B cell (primary cell): ENCODE measurements at regions of chr20 and their contacts with region 1.

Region 1: GRCh38 chr20:34312544-34313217 is 9.5 kb upstream of the AHCY start:
- DNase-seq: peak; percentile 90
- ATAC-seq: peak; percentile 100
- H3K4me3 ChIP-seq: no peak overlapping the region
- H3K4me3 Mint-ChIP-seq: peak overlapping the region; percentile 32
- H3K27ac ChIP-seq: no peak overlapping the region
- H3K27ac Mint-ChIP-seq: peak overlapping the region; percentile 50
- H3K4me1 ChIP-seq: peaks cover 17 to 20% of the 10 kb centered on the region in 2 donors
- H3K4me1 Mint-ChIP-seq: peaks cover 16% of the 10 kb centered on the region
- H3K27me3 ChIP-seq: peaks cover 0 to 18% (median 13%) of the 10 kb centered on the region in 4 experiments
- H3K27me3 Mint-ChIP-seq: peaks cover 13% of the 10 kb centered on the region
- CTCF ChIP-seq: peak; percentile 100

Region 2: DNA sequence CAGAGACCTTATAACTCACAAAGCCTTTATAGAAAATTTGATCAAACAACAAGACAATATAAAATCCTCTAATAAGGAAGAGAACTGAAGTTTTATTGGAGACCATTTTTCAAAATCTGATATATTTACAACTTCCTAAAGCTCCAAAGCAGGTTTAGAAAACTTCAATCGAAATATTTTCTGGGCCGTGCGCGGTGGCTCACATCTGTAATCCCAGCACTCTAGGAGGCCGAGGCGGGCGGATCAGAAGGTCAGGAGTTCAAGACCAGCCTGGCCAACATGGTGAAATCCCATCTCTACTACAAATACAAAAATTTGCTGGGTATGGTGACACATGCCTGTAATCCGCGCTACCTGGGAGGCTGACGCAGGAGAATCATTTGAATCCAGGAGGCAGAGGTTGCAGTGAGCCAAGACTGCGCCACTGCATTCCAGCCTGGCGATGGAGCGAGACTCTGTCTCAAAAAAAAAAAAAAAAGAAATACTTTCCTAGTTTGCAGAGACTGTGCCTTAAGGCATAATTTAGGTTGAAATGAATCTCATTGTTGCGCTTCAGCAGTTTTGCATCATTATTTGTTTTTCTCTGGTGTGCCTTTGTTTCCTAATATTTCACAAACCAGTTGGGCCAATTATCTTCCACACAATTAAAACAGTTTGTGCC is 132.1 kb before region 1 on chr20:
- CTCF ChIA-PET with region 1: no interaction called
- POLR2A ChIA-PET with region 1: no interaction called
- intact Hi-C with region 1: no loop called
- DNase-seq: no peak
- ATAC-seq: no peak
- H3K4me3 ChIP-seq: no peak overlapping the region
- H3K4me3 Mint-ChIP-seq: no peak overlapping the region
- H3K27ac ChIP-seq: no peak overlapping the region
- H3K27ac Mint-ChIP-seq: no peak overlapping the region
- H3K4me1 ChIP-seq: no peaks in the 10 kb centered on the region
- H3K4me1 Mint-ChIP-seq: peaks cover 3% of the 10 kb centered on the region
- H3K27me3 ChIP-seq: peaks cover 0 to 4% (median 1%) of the 10 kb centered on the region in 4 experiments
- H3K27me3 Mint-ChIP-seq: peaks cover 15% of the 10 kb centered on the region
- CTCF ChIP-seq: no peak

Region 3: DNA sequence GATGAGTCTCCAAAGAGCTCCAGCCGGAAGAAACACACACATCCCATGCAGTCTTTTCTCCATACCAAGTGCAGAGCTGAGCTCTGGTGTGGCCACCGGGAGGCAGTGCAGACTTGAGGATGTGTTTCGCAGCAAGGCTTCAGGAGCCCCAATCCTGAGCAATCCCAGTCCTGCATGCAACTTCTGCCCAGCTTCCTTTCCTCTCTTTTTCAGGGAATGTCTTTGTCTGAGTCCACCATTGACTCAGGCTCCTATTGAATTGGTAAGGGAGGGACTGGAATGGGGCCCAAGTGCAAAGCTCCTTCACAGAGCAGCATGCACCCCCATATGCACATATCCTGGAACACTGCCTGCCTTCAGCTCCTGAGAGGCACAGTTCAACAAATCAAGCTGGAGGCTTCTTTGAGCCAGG is 122.0 kb before region 1 on chr20:
- CTCF ChIA-PET with region 1: interaction called, 21 read pairs
- POLR2A ChIA-PET with region 1: no interaction called
- intact Hi-C with region 1: no loop called
- DNase-seq: peak; percentile 53
- ATAC-seq: no peak
- H3K4me3 ChIP-seq: no peak overlapping the region
- H3K4me3 Mint-ChIP-seq: no peak overlapping the region
- H3K27ac ChIP-seq: no peak overlapping the region
- H3K27ac Mint-ChIP-seq: no peak overlapping the region
- H3K4me1 ChIP-seq: no peaks in the 10 kb centered on the region
- H3K4me1 Mint-ChIP-seq: peaks cover 1% of the 10 kb centered on the region
- H3K27me3 ChIP-seq: peaks cover 0 to 7% (median 0%) of the 10 kb centered on the region in 4 experiments
- H3K27me3 Mint-ChIP-seq: peaks cover 48% of the 10 kb centered on the region
- CTCF ChIP-seq: peak; percentile 41

Region 4: DNA sequence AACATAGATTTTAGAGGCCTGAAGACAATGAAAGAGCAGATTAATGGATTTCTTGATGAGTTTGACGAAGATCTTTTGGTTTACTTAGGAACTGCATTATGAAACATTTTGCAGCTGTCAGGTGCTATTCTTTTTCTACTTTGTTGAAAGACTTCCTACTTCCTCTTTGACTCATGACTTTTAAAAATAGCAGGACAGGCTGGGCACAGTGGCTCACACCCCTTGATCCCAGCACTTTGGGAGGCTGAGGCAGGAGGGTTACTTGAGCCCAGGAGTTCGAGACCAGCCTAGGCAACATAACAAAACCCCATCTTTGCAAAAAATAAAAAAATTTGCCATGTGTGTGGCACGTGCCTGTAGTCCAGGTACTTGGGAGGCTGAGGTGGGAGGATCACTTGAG is 102.4 kb after region 1 on chr20:
- CTCF ChIA-PET with region 1: interaction called, 20 read pairs
- POLR2A ChIA-PET with region 1: no interaction called
- intact Hi-C with region 1: loop called (anchors 5 kb)
- DNase-seq: peak; percentile 31
- ATAC-seq: no peak
- H3K4me3 ChIP-seq: peak overlapping the region in 1 of 5 experiments; percentile 12
- H3K4me3 Mint-ChIP-seq: peak overlapping the region; percentile 64
- H3K27ac ChIP-seq: peak overlapping the region; percentile 35 to 42
- H3K27ac Mint-ChIP-seq: peak overlapping the region; percentile 74
- H3K4me1 ChIP-seq: peaks cover 16 to 20% of the 10 kb centered on the region in 2 donors
- H3K4me1 Mint-ChIP-seq: peaks cover 18% of the 10 kb centered on the region
- H3K27me3 ChIP-seq: no peaks in the 10 kb centered on the region
- H3K27me3 Mint-ChIP-seq: no peaks in the 10 kb centered on the region
- CTCF ChIP-seq: no peak

Region 5: GRCh38 chr20:34493646-34494045 is 181.0 kb after region 1 on chr20:
- CTCF ChIA-PET with region 1: interaction called, 14 read pairs
- POLR2A ChIA-PET with region 1: no interaction called
- intact Hi-C with region 1: no loop called
- DNase-seq: no peak
- ATAC-seq: no peak
- H3K4me3 ChIP-seq: no peak overlapping the region
- H3K4me3 Mint-ChIP-seq: no peak overlapping the region
- H3K27ac ChIP-seq: no peak overlapping the region
- H3K27ac Mint-ChIP-seq: no peak overlapping the region
- H3K4me1 ChIP-seq: peaks cover 3 to 6% of the 10 kb centered on the region in 2 donors
- H3K4me1 Mint-ChIP-seq: peaks cover 13% of the 10 kb centered on the region
- H3K27me3 ChIP-seq: no peaks in the 10 kb centered on the region
- H3K27me3 Mint-ChIP-seq: no peaks in the 10 kb centered on the region
- CTCF ChIP-seq: no peak

Region 6: DNA sequence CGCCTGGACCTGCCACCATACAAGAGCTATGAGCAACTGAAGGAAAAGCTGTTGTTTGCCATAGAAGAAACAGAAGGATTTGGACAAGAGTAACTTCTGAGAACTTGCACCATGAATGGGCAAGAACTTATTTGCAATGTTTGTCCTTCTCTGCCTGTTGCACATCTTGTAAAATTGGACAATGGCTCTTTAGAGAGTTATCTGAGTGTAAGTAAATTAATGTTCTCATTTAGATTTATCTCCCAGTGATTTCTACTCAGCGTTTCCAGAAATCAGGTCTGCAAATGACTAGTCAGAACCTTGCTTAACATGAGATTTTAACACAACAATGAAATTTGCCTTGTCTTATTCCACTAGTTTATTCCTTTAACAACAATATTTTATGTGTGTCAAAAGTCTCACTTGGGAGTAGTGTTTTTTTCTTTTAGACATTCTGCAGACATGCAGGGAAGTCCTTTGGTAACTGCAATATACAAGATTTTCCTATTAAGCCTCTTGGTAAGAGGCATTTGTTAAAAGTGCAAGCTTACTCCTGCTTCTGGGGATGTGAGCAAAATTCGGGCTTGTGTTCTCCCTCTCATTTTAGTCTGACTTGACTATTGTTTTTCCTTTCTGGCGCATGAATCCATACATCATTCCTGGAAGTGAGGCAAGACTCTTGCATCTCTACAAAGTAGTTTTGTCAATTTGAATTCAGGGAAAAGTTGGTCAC is 195.2 kb after region 1 on chr20:
- CTCF ChIA-PET with region 1: no interaction called
- POLR2A ChIA-PET with region 1: no interaction called
- intact Hi-C with region 1: no loop called
- DNase-seq: no peak
- ATAC-seq: no peak
- H3K4me3 ChIP-seq: no peak overlapping the region
- H3K4me3 Mint-ChIP-seq: no peak overlapping the region
- H3K27ac ChIP-seq: no peak overlapping the region
- H3K27ac Mint-ChIP-seq: no peak overlapping the region
- H3K4me1 ChIP-seq: no peaks in the 10 kb centered on the region
- H3K4me1 Mint-ChIP-seq: peaks cover 3% of the 10 kb centered on the region
- H3K27me3 ChIP-seq: no peaks in the 10 kb centered on the region
- H3K27me3 Mint-ChIP-seq: no peaks in the 10 kb centered on the region
- CTCF ChIP-seq: no peak

Region 7: DNA sequence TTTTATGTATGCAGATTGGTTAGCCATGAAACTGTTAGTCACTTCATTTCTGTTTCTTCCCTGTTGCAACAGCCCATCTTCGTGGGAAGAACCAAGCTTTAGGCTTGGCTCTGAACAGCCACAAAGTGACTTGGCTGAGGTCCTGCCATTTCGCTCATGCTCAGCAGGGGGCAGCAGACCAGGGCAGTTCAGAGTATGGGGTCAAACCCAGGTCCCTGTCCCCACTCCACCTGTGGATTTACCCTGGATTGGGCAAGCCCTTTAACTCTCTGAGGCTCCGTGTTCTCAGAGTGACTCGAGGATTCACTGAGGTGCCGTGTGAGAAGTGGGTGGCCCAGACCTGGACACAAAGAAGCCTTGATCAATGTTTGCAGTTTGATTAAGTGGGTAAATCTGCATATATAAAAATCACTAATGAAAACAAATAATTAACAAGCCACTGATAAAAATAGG is 226.0 kb after region 1 on chr20:
- CTCF ChIA-PET with region 1: interaction called, 14 read pairs
- POLR2A ChIA-PET with region 1: interaction called, 4 read pairs
- intact Hi-C with region 1: loop called (anchors 5 kb)
- DNase-seq: peak; percentile 67
- ATAC-seq: peak; percentile 68
- H3K4me3 ChIP-seq: no peak overlapping the region
- H3K4me3 Mint-ChIP-seq: no peak overlapping the region
- H3K27ac ChIP-seq: no peak overlapping the region
- H3K27ac Mint-ChIP-seq: no peak overlapping the region
- H3K4me1 ChIP-seq: no peaks in the 10 kb centered on the region
- H3K4me1 Mint-ChIP-seq: peaks cover 12% of the 10 kb centered on the region
- H3K27me3 ChIP-seq: no peaks in the 10 kb centered on the region
- H3K27me3 Mint-ChIP-seq: no peaks in the 10 kb centered on the region
- CTCF ChIP-seq: peak; percentile 92

Region 8: GRCh38 chr20:34955232-34956040 is 642.8 kb after region 1 on chr20 and contains the starts of genes GSS and MYH7B:
- CTCF ChIA-PET with region 1: no interaction called
- POLR2A ChIA-PET with region 1: no interaction called
- intact Hi-C with region 1: loop called (anchors 2 kb)
- DNase-seq: peak; percentile 95
- ATAC-seq: peak; percentile 93
- H3K4me3 ChIP-seq: peak within 1 kb of the TSS; percentile 58 to 88 (median 73)
- H3K4me3 Mint-ChIP-seq: peak within 1 kb of the TSS; percentile 97
- H3K27ac ChIP-seq: peak within 1 kb of the TSS; percentile 42 to 79
- H3K27ac Mint-ChIP-seq: peak within 1 kb of the TSS; percentile 93
- H3K4me1 ChIP-seq: peaks cover 5 to 16% of the 10 kb centered on the region in 2 donors
- H3K4me1 Mint-ChIP-seq: peaks cover 25% of the 10 kb centered on the region
- H3K27me3 ChIP-seq: no peaks in the 10 kb centered on the region
- H3K27me3 Mint-ChIP-seq: no peaks in the 10 kb centered on the region
- CTCF ChIP-seq: no peak
- total RNA-seq, gene GSS: 22.0 and 22.5 TPM in 2 replicates
- total RNA-seq, gene MYH7B: 0.66 and 0.79 TPM in 2 replicates